ENCODE measurements at regions of chr3 and their contacts with region 1.

Region 1: GRCh38 chr3:4584456-4585249 is 91.5 kb downstream of the ITPR1 start:
- DNase-seq: peak in 1 of 2 donors; percentile 54
- ATAC-seq: peak; percentile 67
- H3K4me3 ChIP-seq: peak overlapping the region; percentile 36 to 52
- H3K27ac ChIP-seq: peak overlapping the region; percentile 92 to 98
- H3K4me1 ChIP-seq: peaks cover 5 to 16% of the 10 kb centered on the region in 2 donors
- H3K27me3 ChIP-seq: no peaks in the 10 kb centered on the region

Region 2: DNA sequence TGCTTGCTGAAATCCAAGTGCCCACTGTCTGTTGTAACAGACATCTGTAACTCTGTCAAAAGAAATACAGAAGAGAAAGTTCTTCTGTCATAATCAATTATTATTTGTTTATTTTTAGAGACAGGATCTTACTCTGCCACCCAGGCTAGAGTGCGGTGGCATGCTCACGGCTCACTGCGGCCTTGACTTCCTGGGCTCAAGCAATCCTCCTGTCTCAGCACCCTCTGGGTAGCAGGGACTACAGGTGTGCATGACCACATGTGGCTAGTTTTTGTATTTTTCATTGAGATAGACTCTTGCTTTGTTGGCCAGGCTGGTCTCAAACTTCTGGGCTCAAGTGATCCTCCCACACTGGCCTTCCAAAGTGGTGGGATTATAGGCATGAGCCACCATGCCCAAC is 459.1 kb before region 1 on chr3:
- intact Hi-C with region 1: no loop called
- DNase-seq: no peak
- ATAC-seq: no peak
- H3K4me3 ChIP-seq: no peak overlapping the region
- H3K27ac ChIP-seq: no peak overlapping the region
- H3K4me1 ChIP-seq: no peaks in the 10 kb centered on the region
- H3K27me3 ChIP-seq: no peaks in the 10 kb centered on the region

Region 3: DNA sequence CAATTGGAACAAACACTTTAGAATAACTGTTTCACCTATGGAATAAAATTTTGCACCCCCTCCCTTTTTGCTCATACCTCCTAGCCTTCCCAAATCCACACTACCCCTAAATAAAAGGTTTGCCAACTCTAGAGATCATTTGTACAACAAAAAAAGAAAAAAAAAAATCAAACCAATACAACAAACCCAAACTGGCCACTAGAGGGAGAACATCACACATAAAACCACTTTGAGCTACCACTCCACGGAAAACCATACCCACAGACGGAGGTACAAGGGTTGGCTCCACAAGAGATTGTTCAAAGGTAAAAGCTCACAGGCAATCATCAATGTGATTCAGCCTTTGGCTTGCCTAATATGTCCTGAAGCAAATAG is 233.9 kb before region 1 on chr3:
- intact Hi-C with region 1: loop called (anchors 2 to 5 kb)
- DNase-seq: no peak
- ATAC-seq: peak; percentile 94
- H3K4me3 ChIP-seq: peak overlapping the region; percentile 35 to 40
- H3K27ac ChIP-seq: peak overlapping the region in 1 of 2 donors; percentile 67
- H3K4me1 ChIP-seq: no peaks in the 10 kb centered on the region
- H3K27me3 ChIP-seq: no peaks in the 10 kb centered on the region

Region 4: GRCh38 chr3:4416961-4417360 is 167.7 kb before region 1 on chr3:
- intact Hi-C with region 1: loop called (anchors 2 to 5 kb)
- DNase-seq: peak; percentile 92
- ATAC-seq: peak; percentile 86
- H3K4me3 ChIP-seq: no peak overlapping the region
- H3K27ac ChIP-seq: peak overlapping the region in 1 of 2 donors; percentile 64
- H3K4me1 ChIP-seq: peaks cover 0 to 6% of the 10 kb centered on the region in 2 donors
- H3K27me3 ChIP-seq: no peaks in the 10 kb centered on the region

Region 5: DNA sequence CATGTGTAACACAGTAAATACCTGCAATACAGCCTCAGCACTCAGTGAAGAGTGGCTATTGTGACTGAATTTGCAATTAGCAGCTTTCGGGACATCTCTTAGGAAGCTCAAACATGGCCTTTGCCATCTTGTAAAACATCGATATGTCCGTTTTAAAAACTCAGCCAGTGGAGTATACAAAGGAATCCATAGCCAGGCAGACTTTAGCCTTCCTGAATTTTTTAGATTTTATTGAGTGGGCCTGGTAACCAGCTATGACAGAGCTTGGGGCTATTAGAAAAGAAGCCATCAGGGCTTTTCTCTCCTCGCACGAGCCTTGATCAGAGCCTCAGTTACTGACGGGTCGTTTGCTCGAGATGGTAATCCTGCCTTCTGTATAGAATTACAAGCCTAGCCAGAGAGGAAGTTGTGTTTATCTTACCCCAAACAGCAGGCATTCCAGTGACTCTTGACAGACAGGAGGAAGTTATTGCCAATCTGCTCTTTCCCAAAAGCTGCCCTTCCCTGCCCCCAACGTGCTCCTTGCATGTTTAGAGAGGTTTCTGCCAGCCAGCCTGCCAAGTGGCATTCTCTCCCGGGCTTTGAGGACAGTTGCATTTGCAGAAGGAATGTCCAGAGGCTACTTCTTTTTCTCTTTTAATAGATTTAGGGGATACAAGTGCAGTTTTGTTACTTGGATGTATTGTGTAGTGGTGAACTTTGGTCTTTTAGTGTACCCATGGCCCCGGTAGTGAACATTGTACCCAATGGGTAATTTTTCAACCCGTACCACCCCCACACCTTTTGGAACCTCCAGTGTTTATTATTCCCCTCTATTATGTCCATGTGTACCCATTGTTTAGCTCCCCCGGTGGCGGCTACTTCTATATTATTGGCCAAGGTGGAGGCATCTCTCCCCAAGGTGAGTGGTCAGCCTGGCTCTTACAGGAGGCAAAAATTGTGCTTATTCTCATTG is 50.9 kb before region 1 on chr3:
- intact Hi-C with region 1: loop called (anchors 1 to 10 kb)
- DNase-seq: peak in 1 of 2 donors; percentile 73
- ATAC-seq: peak; percentile 31
- H3K4me3 ChIP-seq: no peak overlapping the region
- H3K27ac ChIP-seq: peak overlapping the region in 1 of 2 donors; percentile 28
- H3K4me1 ChIP-seq: peaks cover 1 to 22% of the 10 kb centered on the region in 2 donors
- H3K27me3 ChIP-seq: no peaks in the 10 kb centered on the region

Region 6: GRCh38 chr3:4633078-4634004 is 48.7 kb after region 1 on chr3:
- intact Hi-C with region 1: loop called (anchors 5 kb)
- DNase-seq: no peak
- ATAC-seq: peak; percentile 87
- H3K4me3 ChIP-seq: no peak overlapping the region
- H3K27ac ChIP-seq: no peak overlapping the region
- H3K4me1 ChIP-seq: peaks cover 0 to 1% of the 10 kb centered on the region in 2 donors
- H3K27me3 ChIP-seq: no peaks in the 10 kb centered on the region

Region 7: GRCh38 chr3:4687167-4687566 is 102.5 kb after region 1 on chr3:
- intact Hi-C with region 1: no loop called
- DNase-seq: no peak
- ATAC-seq: no peak
- H3K4me3 ChIP-seq: no peak overlapping the region
- H3K27ac ChIP-seq: no peak overlapping the region
- H3K4me1 ChIP-seq: no peaks in the 10 kb centered on the region
- H3K27me3 ChIP-seq: no peaks in the 10 kb centered on the region

Measured in aorta (tissue), 5 donors.